Heart right ventricle (tissue), 16 donors: ENCODE measurements at regions of chr22 and their contacts with region 1.

Region 1: GRCh38 chr22:33519071-33519973 is 401.0 kb downstream of the LARGE1 start:
- DNase-seq: peak in 1 of 2 donors; percentile 63
- ATAC-seq: peak; percentile 49 to 79 (median 62)
- H3K4me3 ChIP-seq: no peak overlapping the region
- H3K27ac ChIP-seq: no peak overlapping the region
- H3K4me1 ChIP-seq: peaks cover 2 to 42% (median 14%) of the 10 kb centered on the region in 9 donors
- H3K27me3 ChIP-seq: no peaks in the 10 kb centered on the region
- CTCF ChIP-seq: peak; percentile 55 to 81 (median 69)

Region 2: GRCh38 chr22:33380789-33381530 is 138.4 kb before region 1 on chr22:
- intact Hi-C with region 1: no loop called
- DNase-seq: no peak
- ATAC-seq: no peak
- H3K4me3 ChIP-seq: no peak overlapping the region
- H3K27ac ChIP-seq: no peak overlapping the region
- H3K4me1 ChIP-seq: no peaks in the 10 kb centered on the region
- H3K27me3 ChIP-seq: no peaks in the 10 kb centered on the region
- CTCF ChIP-seq: no peak

Region 3: DNA sequence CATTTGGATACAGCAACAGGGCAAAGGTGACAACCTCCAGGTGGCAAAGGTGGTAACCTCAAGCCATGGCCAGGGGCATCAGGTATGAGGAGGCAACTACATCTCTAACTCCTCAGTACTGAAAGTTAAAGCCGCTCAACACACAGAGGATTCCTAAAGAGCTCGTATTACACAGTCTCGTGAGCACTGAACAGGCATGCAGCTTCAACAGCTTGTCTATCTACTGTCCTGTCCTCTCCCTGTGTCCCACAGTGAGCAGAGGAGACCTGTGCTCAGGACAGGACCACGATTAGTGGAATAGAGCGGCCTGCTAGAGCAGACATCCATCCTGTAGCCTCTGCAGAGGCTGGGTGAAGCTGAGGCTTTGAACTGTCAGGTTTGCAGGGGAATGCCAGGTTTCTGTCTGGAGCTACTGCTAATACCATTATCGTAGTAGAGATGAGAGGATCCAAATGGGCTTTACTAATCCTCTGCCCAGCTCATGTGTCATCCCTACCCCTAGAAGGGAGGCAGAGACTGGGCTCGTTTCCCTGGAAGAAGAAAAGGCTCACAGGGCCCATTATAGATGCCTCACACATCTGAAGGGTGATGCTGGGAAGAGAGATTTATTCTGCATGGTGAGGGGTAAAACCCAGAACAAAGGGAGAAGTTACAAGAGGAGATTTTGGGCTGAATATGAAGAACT is 14.2 kb before region 1 on chr22:
- intact Hi-C with region 1: loop called in 1 of 10 experiments (anchors 1 kb)
- DNase-seq: no peak
- ATAC-seq: peak in 2 of 8 donors; percentile 33 to 59
- H3K4me3 ChIP-seq: no peak overlapping the region
- H3K27ac ChIP-seq: no peak overlapping the region
- H3K4me1 ChIP-seq: peaks cover 0 to 19% (median 9%) of the 10 kb centered on the region in 9 donors
- H3K27me3 ChIP-seq: no peaks in the 10 kb centered on the region
- CTCF ChIP-seq: no peak

Region 4: GRCh38 chr22:33579448-33580093 is 60.2 kb after region 1 on chr22:
- intact Hi-C with region 1: loop called in 9 of 10 experiments (anchors 1 to 2 kb)
- DNase-seq: peak; percentile 41 to 75
- ATAC-seq: peak; percentile 88 to 94 (median 92)
- H3K4me3 ChIP-seq: no peak overlapping the region
- H3K27ac ChIP-seq: no peak overlapping the region
- H3K4me1 ChIP-seq: peaks cover 7 to 42% (median 24%) of the 10 kb centered on the region in 9 donors
- H3K27me3 ChIP-seq: no peaks in the 10 kb centered on the region
- CTCF ChIP-seq: peak; percentile 78 to 96 (median 93)

Region 5: GRCh38 chr22:34105461-34106062 is 586.2 kb after region 1 on chr22:
- intact Hi-C with region 1: loop called in 4 of 10 experiments (anchors 10 kb)
- DNase-seq: peak; percentile 43 to 54
- ATAC-seq: peak in 5 of 8 donors; percentile 62 to 83 (median 70)
- H3K4me3 ChIP-seq: no peak overlapping the region
- H3K27ac ChIP-seq: no peak overlapping the region
- H3K4me1 ChIP-seq: no peaks in the 10 kb centered on the region
- H3K27me3 ChIP-seq: peaks cover 0 to 26% (median 8%) of the 10 kb centered on the region in 7 donors
- CTCF ChIP-seq: peak; percentile 35 to 75 (median 69)

Region 6: GRCh38 chr22:34111210-34111824 is 592.0 kb after region 1 on chr22:
- intact Hi-C with region 1: loop called in 4 of 10 experiments (anchors 10 kb)
- DNase-seq: peak in 1 of 2 donors; percentile 9
- ATAC-seq: peak in 6 of 8 donors; percentile 46 to 73 (median 61)
- H3K4me3 ChIP-seq: no peak overlapping the region
- H3K27ac ChIP-seq: no peak overlapping the region
- H3K4me1 ChIP-seq: no peaks in the 10 kb centered on the region
- H3K27me3 ChIP-seq: peaks cover 0 to 10% (median 5%) of the 10 kb centered on the region in 7 donors
- CTCF ChIP-seq: peak; percentile 34 to 76 (median 74)